Activated B cell treated with CpG ODN at 0.5 μM for 24 hours (primary cell): ENCODE measurements at regions of chr16 and their contacts with region 1.

Region 1: GRCh38 chr16:27355610-27356009 is 41.8 kb downstream of the IL4R start:
- DNase-seq: no peak
- ATAC-seq: peak; percentile 56
- H3K4me3 Mint-ChIP-seq: no peak overlapping the region
- H3K27ac Mint-ChIP-seq: peak overlapping the region; percentile 54
- H3K4me1 Mint-ChIP-seq: peaks cover 6% of the 10 kb centered on the region
- H3K27me3 Mint-ChIP-seq: no peaks in the 10 kb centered on the region
- CTCF ChIP-seq: no peak

Region 2: DNA sequence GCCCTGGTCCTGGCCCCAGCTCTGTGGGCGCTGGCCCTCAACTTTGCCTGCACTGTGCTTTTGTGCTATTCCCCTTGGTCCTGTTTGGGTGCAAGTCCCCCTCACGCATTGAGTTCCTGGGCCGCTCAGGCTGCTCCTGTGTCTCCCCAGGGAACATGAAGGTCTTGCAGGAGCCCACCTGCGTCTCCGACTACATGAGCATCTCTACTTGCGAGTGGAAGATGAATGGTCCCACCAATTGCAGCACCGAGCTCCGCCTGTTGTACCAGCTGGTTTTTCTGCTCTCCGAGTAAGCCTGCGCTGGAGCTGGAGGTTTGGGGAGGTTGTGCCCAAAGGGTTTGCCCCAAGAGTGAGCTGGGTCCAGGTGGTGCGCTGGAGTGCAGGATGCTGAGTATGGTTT is 13.6 kb before region 1 on chr16:
- CTCF ChIA-PET with region 1: interaction called, 3 read pairs
- POLR2A ChIA-PET with region 1: interaction called, 5 read pairs
- intact Hi-C with region 1: loop called (anchors 2 kb)
- DNase-seq: no peak
- ATAC-seq: no peak
- H3K4me3 Mint-ChIP-seq: no peak overlapping the region
- H3K27ac Mint-ChIP-seq: peak overlapping the region; percentile 50
- H3K4me1 Mint-ChIP-seq: peaks cover 62% of the 10 kb centered on the region
- H3K27me3 Mint-ChIP-seq: no peaks in the 10 kb centered on the region
- CTCF ChIP-seq: no peak

Region 3: GRCh38 chr16:27387724-27388123 is 32.1 kb after region 1 on chr16:
- CTCF ChIA-PET with region 1: no interaction called
- POLR2A ChIA-PET with region 1: no interaction called
- intact Hi-C with region 1: no loop called
- DNase-seq: no peak
- ATAC-seq: no peak
- H3K4me3 Mint-ChIP-seq: no peak overlapping the region
- H3K27ac Mint-ChIP-seq: peak overlapping the region; percentile 41
- H3K4me1 Mint-ChIP-seq: peaks cover 36% of the 10 kb centered on the region
- H3K27me3 Mint-ChIP-seq: no peaks in the 10 kb centered on the region
- CTCF ChIP-seq: no peak

Region 4: GRCh38 chr16:27404163-27404823 is 48.7 kb after region 1 on chr16:
- CTCF ChIA-PET with region 1: no interaction called
- POLR2A ChIA-PET with region 1: no interaction called
- intact Hi-C with region 1: no loop called
- DNase-seq: no peak
- ATAC-seq: no peak
- H3K4me3 Mint-ChIP-seq: peak overlapping the region; percentile 99
- H3K27ac Mint-ChIP-seq: peak overlapping the region; percentile 96
- H3K4me1 Mint-ChIP-seq: peaks cover 91% of the 10 kb centered on the region
- H3K27me3 Mint-ChIP-seq: no peaks in the 10 kb centered on the region
- CTCF ChIP-seq: no peak

Region 5: GRCh38 chr16:28188085-28188916 is 832.7 kb after region 1 on chr16:
- CTCF ChIA-PET with region 1: no interaction called
- POLR2A ChIA-PET with region 1: interaction called, 15 read pairs
- intact Hi-C with region 1: no loop called
- DNase-seq: no peak
- ATAC-seq: peak; percentile 63
- H3K4me3 Mint-ChIP-seq: peak overlapping the region; percentile 75
- H3K27ac Mint-ChIP-seq: peak overlapping the region; percentile 91
- H3K4me1 Mint-ChIP-seq: peaks cover 93% of the 10 kb centered on the region
- H3K27me3 Mint-ChIP-seq: no peaks in the 10 kb centered on the region
- CTCF ChIP-seq: no peak